Naive thymus-derived CD8-positive, alpha-beta T cell (primary cell): ENCODE measurements at regions of chr2 and their contacts with region 1.

Region 1: DNA sequence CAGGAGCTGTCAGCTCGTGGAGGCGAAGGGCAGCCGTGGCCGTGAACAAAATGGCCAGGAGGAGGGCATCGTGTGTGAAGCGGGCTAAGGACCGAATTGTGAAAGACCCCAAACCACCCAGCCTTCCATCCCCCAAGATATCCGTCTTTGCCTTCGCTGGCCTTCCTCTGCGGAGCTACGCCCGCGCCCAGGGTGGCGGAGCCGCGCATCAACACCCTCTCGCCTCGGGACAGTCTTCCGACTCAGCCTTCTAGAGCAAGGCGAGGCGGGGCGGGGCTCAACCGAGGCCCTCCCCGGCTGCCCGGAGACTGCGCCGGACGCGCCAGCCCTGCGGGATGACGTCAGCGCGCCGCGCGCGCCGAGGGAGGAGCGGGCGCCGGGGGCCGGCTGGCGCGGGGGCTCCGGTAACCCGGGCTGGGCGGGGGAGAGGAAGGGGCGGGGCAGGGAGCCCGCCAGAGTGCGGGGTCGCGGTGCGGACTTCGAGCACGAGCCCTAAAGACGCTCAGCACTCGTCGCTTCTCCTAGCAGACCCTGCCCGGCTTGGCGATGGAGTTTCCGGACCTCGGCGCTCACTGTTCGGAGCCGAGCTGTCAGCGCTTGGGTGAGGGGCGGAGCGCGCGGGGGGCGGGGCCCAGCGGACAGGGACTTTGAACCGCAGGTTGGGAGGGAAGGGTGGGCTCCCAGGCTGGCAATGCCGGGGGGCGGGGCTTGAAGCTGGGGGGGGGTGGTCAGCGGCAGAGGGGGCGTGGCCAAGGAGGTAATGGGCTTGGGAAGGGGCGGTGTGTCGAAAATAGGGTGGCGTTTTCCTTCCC is at the start of gene ZFAND2B:
- DNase-seq: peak; percentile 91 to 98 (median 96)
- ATAC-seq: peak; percentile 94
- H3K4me3 Mint-ChIP-seq: peak within 1 kb of the TSS; percentile 89 to 96 (median 92)
- H3K27ac Mint-ChIP-seq: peak within 1 kb of the TSS; percentile 96 to 100 (median 97)
- H3K4me1 Mint-ChIP-seq: peaks cover 18 to 54% (median 53%) of the 10 kb centered on the region in 4 donors
- H3K27me3 Mint-ChIP-seq: no peaks in the 10 kb centered on the region
- polyA plus RNA-seq, gene ZFAND2B: 78.1 to 85.1 (median 78.1) TPM

Region 2: DNA sequence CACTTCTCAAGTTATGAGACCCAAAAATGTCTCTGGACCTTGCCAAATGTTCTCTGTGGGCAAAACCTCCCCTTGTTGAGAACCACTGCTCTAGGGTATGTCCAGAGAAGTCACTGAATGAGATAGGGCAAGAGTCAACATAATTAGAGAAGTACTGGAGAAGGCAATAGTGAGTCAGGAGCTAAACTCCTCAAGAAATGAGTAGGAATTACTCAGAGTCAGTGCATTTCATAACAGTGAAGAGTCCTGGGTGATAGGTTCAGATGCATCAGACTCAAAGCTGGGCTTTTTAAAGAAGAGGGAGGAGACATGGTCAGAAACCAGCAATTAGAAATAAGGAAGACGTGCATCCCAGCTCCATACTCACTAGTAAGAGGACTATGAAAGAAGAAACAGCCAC is 107.3 kb before region 1 on chr2:
- POLR2A ChIA-PET with region 1: no interaction called
- DNase-seq: no peak
- ATAC-seq: no peak
- H3K4me3 Mint-ChIP-seq: no peak overlapping the region
- H3K27ac Mint-ChIP-seq: no peak overlapping the region
- H3K4me1 Mint-ChIP-seq: peaks cover 0 to 4% (median 3%) of the 10 kb centered on the region in 4 donors
- H3K27me3 Mint-ChIP-seq: no peaks in the 10 kb centered on the region

Region 3: DNA sequence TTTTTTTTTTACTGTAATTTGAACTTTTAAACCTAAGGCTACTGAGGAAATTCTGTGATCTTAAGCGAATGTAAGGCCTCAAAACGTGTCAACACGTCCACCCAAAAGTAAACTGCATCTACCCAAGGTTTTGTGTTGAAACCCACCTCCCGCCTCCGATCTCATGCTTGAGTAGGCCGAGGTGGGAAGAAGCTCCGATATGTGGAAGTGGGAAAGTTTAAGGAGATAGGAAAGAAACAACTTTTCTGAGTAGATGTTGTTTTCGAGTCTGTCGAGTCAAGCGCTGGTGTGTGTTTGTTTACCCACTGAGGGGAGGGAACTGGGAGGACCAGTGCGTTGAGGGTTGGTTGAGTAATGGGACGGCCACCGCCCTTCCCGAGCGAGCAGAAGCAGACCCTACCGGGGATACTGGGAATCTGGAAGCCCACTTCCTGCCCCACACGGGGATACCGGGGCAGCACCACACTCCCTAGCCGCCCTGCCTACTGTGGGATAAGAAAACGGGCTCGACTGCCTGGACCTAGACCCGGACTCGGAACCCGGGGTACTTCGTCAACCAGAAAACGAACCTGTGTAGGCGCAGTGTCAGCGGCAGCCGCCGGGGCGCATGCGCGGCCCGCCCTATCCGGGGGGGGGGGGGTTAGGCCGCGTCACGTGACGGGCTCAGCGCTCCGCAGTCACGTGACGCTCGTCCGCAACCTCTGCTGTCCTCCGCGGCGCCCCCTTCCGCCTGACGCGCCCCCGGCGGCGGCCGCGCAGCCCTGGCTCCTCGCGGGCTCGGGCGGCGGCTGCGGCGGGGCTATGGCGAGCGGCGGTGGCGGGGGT is 28.9 kb before region 1 on chr2 and contains the start of gene RETREG2:
- POLR2A ChIA-PET with region 1: interaction called, 674 read pairs
- DNase-seq: peak; percentile 69 to 91 (median 81)
- ATAC-seq: peak; percentile 51 to 55
- H3K4me3 Mint-ChIP-seq: peak within 1 kb of the TSS; percentile 90 to 98 (median 97)
- H3K27ac Mint-ChIP-seq: peak within 1 kb of the TSS; percentile 96 to 99 (median 98)
- H3K4me1 Mint-ChIP-seq: peaks cover 45 to 77% (median 75%) of the 10 kb centered on the region in 4 donors
- H3K27me3 Mint-ChIP-seq: no peaks in the 10 kb centered on the region
- polyA plus RNA-seq, gene RETREG2: 52.0 to 64.3 (median 57.6) TPM

Region 4: DNA sequence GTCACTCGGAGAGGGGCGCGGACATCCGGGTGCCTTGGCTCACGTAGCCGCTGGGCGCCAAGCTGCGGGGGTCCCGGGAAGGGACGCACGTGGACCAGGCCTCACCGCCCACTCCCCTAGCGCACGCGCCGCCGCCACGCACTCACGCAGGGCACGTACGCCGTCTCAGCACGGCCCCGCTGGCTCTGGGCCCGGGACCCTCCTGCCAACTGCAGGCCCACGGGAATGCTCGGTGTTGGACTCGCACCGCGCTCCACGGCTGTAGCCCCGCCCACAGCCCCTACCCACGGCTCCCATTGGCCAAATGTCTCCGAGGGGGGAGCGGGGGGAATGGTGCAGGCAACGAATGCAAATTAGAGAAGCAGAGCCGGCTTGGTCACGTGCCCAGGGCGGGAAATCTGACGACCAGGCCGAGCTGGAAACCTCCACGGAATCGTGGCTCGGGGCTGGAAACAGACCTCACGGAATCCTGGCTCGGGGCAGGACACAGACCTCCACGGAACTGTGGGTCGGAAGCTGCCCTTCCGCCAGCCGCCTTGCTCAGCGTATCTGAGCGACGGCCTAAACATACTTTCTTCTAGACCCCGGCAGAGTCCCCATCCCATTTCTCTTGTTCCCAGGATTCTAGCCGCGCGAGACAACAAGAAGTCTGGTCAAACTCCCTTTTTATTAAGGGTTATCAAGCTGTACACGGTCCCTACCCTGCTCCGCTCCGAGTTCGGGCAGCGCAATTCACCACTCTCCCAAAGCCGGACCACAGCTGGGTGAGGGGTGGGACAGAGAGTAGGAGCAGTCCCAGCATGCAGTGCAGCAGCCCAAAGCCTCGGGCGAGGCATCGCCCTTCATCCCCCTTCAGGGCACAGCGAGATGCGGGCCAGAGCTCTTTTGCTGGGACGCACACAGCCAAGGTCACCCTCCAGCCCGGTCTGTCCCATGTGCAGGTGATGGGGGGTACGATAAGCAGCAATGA is 12.4 kb after region 1 on chr2 and contains the start of gene ABCB6:
- POLR2A ChIA-PET with region 1: interaction called, 29 read pairs
- DNase-seq: peak; percentile 74 to 94 (median 84)
- ATAC-seq: peak; percentile 92
- H3K4me3 Mint-ChIP-seq: peak within 1 kb of the TSS; percentile 75 to 91 (median 82)
- H3K27ac Mint-ChIP-seq: peak within 1 kb of the TSS; percentile 17 to 89 (median 82)
- H3K4me1 Mint-ChIP-seq: peaks cover 17 to 31% (median 26%) of the 10 kb centered on the region in 4 donors
- H3K27me3 Mint-ChIP-seq: no peaks in the 10 kb centered on the region
- polyA plus RNA-seq, gene ABCB6: 1.6 to 4.9 (median 1.8) TPM

Region 5: GRCh38 chr2:219245148-219245898 is 38.7 kb after region 1 on chr2 and contains the starts of genes GLB1L and STK16:
- POLR2A ChIA-PET with region 1: interaction called, 134 read pairs
- DNase-seq: peak; percentile 70 to 92 (median 85)
- ATAC-seq: peak; percentile 61 to 62
- H3K4me3 Mint-ChIP-seq: peak within 1 kb of the TSS; percentile 84 to 100 (median 96)
- H3K27ac Mint-ChIP-seq: peak within 1 kb of the TSS; percentile 94 to 99 (median 98)
- H3K4me1 Mint-ChIP-seq: peaks cover 19 to 70% (median 69%) of the 10 kb centered on the region in 4 donors
- H3K27me3 Mint-ChIP-seq: no peaks in the 10 kb centered on the region
- polyA plus RNA-seq, gene GLB1L: 0.62 to 1.8 (median 1.7) TPM
- polyA plus RNA-seq, gene STK16: 21.6 to 25.8 (median 23.7) TPM

Region 6: DNA sequence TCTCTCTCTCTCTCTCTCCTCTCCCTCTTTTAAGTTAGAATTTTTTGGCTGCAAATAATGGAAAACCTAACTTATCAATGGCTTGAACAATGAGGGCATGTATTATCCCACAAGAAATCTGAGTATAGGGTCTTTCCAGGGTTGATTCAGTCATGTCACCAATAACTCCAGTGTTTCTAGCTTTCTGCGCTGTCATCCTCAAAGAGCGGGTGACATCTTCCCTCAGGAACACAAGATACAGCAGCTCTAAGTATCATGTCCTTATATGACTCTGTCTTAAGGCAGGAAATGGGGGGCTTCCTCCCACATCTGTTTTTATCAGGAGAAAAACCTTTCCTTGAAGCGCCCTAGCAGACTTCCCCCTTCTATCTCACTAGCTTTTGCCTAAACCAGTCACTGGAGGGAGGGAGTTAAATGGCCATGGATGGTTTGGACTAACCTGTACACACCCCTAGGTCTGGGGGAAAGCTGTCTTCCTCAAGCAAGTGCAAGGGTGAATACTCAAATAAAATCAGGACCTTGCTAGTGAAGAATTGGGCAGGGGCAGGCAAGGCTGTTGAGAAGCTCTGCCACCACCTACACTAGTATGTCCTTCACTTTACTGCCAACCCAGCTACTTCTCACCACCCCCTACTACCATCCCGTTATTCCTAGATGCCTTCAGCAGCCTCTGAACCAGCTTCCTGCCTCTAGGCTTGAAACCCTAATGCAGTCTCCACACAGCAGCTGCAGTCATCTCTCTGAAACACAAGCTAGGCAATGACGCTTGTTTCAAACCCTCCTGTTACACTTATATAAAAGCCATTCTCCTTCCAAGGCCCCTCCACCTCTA is 54.6 kb after region 1 on chr2:
- POLR2A ChIA-PET with region 1: no interaction called
- DNase-seq: no peak
- ATAC-seq: peak in 1 of 2 donors; percentile 74
- H3K4me3 Mint-ChIP-seq: no peak overlapping the region
- H3K27ac Mint-ChIP-seq: peak overlapping the region in 2 of 10 donors; percentile 27 to 48
- H3K4me1 Mint-ChIP-seq: peaks cover 9 to 13% (median 11%) of the 10 kb centered on the region in 4 donors
- H3K27me3 Mint-ChIP-seq: peaks cover 0 to 5% (median 0%) of the 10 kb centered on the region in 5 donors

Region 7: DNA sequence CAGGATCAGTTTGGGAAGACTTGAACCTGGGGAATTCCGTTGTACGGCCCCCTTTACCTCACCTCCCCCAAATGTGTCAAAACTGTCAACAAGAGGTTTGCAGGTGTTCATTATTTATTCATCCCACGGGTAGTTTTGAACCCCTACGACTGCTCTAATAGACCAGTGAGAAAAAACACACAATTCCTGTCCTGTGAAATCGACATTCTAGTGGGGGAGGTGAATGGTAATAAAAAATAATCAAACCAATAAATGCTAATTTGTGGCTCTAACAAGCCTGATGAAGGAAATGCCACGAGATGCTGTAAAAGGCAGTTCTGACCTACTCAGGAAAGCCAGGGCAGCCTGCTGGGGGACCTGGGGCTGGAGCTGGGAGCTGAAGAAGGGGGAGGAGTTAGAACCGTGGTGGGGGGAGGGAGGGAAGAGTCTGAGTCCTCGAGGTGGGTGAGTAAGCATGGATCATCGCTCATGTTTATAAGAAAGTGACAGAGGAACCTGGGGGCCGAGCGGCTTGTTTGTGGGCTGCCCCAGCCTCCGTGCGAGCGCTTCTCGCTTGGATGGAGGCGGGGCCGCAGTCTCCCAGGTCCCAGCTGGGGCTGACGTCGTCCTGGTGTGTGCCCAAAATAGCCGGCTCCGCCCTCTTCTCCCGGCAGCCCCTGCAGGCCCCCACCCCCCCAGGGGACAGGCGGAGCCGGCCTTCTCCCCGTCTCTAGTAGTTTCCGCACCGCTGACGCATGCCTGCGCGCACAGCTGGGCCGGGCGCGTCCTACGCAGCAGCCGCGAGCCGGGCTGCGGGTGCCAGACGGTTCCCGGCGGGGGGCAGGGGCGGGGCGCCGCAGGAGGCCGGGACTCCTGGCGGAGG is 72.2 kb after region 1 on chr2 and contains the start of gene DNAJB2:
- POLR2A ChIA-PET with region 1: interaction called, 15 read pairs
- DNase-seq: peak; percentile 92 to 99 (median 98)
- ATAC-seq: peak; percentile 81 to 87
- H3K4me3 Mint-ChIP-seq: peak within 1 kb of the TSS; percentile 89 to 99 (median 98)
- H3K27ac Mint-ChIP-seq: peak within 1 kb of the TSS; percentile 98 to 100 (median 100)
- H3K4me1 Mint-ChIP-seq: peaks cover 21 to 54% (median 50%) of the 10 kb centered on the region in 4 donors
- H3K27me3 Mint-ChIP-seq: peaks cover 0 to 2% (median 0%) of the 10 kb centered on the region in 5 donors
- polyA plus RNA-seq, gene DNAJB2: 5.0 to 6.6 (median 5.9) TPM